Dorsolateral prefrontal cortex (tissue), 120 donors: ENCODE measurements at regions of chr4 and their contacts with region 1.

Region 1: GRCh38 chr4:158193171-158193749 is 17.0 kb upstream of the TMEM144 start:
- DNase-seq: no peak
- H3K4me3 ChIP-seq: no peak overlapping the region
- H3K27ac ChIP-seq: peak overlapping the region in 58 of 59 donors; percentile 33 to 94 (median 88)
- H3K27me3 ChIP-seq: no peaks in the 10 kb centered on the region
- CTCF ChIP-seq: peak; percentile 43 to 90 (median 73)

Region 2: GRCh38 chr4:158209825-158210807 is 16.9 kb after region 1 on chr4 and contains the start of gene TMEM144:
- intact Hi-C with region 1: loop called in 1 of 2 experiments (anchors 2 kb)
- DNase-seq: peak; percentile 82 to 98 (median 96)
- H3K4me3 ChIP-seq: peak within 1 kb of the TSS; percentile 33 to 87 (median 67)
- H3K27ac ChIP-seq: peak within 1 kb of the TSS; percentile 85 to 100 (median 97)
- H3K27me3 ChIP-seq: no peaks in the 10 kb centered on the region
- CTCF ChIP-seq: peak in 39 of 56 donors; percentile 5 to 58 (median 29)
- total RNA-seq, gene TMEM144: 33.2 to 1,060 (median 211) TPM

Region 3: DNA sequence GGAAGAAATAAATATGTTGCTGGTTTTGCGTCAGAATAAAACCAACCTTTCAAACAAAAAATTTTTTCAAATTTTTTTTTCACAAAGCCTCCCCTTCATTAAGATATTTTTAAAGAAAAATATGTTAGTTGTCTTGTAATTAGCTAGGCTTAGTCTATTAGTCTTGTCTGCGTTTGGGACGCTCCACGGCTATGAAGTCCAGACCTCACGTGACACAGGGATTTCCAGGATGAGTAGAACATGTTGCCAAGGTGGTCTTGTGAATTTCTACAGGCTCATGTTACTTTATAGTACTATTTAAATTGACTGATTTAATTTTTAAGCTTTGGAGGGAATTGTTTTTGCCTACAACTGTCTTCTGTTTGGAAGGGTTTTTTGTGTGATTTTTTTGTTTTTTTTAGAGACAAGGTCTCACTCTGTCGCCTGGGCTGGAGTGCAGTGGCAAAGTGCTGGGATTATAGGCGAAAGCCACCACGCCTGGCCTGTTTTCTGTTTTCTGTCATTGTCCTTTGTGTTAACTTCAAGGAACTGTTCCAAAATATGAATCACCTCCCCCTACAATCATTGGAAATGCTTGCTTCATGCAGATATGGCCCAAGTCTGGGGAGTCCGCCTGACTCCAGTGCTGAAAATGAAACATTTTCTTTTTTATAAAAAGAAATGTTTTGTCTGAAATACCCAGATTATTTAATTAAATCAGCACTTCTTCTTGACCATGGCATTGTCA is 43.2 kb after region 1 on chr4:
- intact Hi-C with region 1: loop called in 1 of 2 experiments (anchors 5 kb)
- DNase-seq: peak in 8 of 10 donors; percentile 23 to 75 (median 56)
- H3K4me3 ChIP-seq: peak overlapping the region in 1 of 59 donors; percentile 6
- H3K27ac ChIP-seq: peak overlapping the region; percentile 62 to 100 (median 95)
- H3K27me3 ChIP-seq: no peaks in the 10 kb centered on the region
- CTCF ChIP-seq: peak in 4 of 56 donors; percentile 11 to 18 (median 14)

Region 4: DNA sequence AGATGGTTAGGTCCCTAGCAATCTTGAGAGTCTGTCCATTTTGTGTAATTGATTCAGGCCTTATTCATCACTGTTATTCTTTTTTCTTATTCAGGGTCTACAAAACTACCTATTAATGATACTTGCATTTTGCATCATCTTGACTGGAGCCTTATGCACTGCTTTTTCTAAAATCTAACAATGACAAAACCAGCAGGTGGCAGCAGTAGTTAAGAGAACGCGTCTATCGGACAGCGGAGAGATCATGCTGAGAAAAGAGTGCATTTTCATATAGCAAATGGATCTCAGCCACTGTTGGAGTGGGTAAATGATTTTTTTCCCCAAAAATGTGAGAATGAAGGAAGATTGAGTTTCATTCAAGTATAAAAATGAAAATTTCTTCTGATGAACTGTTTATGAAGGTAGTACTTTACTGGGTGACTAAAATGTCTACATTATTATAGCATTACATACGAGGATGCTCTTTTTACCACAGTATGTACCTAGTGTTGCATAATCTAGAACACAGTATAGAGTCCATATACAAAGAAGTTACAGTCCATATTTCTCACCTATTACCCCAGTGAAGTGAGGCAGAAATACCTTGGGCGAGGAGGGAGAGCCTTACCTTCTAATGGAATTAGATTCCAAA is 60.2 kb after region 1 on chr4:
- intact Hi-C with region 1: loop called (anchors 5 kb)
- DNase-seq: peak in 3 of 10 donors; percentile 45 to 69 (median 46)
- H3K4me3 ChIP-seq: peak overlapping the region in 4 of 59 donors; percentile 19 to 38 (median 20)
- H3K27ac ChIP-seq: peak overlapping the region in 58 of 59 donors; percentile 44 to 100 (median 82)
- H3K27me3 ChIP-seq: no peaks in the 10 kb centered on the region
- CTCF ChIP-seq: peak; percentile 42 to 93 (median 78)